Activated CD8-positive, alpha-beta memory T cell treated with anti-CD3 and anti-CD28 coated beads, Interleukin-2, amount 10 ng/mL, durations not matched to agents 7 days and 5 days (primary cell): ENCODE measurements at regions of chr11 and their contacts with region 1.

Region 1: DNA sequence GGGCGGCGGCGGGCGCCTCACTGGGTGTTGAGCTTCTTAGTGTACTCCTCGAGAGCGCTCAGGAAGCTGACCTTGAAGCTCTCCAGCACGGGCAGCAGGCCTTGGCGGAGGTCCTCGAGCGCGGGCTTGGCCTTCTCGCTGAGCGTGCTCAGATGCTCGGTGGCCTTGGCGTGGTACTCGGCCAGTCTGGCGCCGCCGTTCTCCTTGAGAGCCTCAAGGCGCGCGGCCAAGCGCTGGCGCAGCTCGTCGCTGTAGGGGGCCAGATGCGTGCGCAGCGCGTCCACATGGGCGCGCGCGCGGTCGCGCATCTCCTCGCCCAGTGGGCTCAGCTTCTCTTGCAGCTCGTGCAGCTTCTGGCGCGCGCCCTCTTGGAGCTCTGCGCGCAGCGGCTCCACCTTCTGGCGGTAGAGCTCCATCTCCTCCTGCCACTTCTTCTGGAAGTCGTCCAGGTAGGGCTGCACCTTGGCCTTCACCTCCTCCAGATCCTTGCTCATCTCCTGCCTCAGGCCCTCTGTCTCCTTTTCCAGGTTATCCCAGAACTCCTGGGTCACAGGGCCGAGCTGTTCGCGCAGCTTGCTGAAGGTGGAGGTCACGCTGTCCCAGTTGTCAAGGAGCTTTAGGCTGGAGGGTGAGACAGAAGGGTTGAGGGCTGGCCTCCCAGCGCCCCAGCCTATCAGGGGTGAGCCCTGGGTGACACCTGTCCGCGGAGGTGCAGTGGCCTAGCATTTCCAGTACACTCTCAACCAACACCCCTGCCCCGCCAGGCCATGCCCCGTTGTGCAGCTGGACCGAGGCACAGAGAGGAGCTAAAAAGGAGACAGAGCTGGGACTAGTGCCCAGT is 1.4 kb downstream of the APOA1 start:
- DNase-seq: peak; percentile 92
- ATAC-seq: peak; percentile 96
- H3K4me3 Mint-ChIP-seq: peak overlapping the region; percentile 71
- H3K27ac Mint-ChIP-seq: peak overlapping the region; percentile 61
- H3K4me1 Mint-ChIP-seq: peaks cover 12% of the 10 kb centered on the region
- H3K27me3 Mint-ChIP-seq: no peaks in the 10 kb centered on the region

Region 2: DNA sequence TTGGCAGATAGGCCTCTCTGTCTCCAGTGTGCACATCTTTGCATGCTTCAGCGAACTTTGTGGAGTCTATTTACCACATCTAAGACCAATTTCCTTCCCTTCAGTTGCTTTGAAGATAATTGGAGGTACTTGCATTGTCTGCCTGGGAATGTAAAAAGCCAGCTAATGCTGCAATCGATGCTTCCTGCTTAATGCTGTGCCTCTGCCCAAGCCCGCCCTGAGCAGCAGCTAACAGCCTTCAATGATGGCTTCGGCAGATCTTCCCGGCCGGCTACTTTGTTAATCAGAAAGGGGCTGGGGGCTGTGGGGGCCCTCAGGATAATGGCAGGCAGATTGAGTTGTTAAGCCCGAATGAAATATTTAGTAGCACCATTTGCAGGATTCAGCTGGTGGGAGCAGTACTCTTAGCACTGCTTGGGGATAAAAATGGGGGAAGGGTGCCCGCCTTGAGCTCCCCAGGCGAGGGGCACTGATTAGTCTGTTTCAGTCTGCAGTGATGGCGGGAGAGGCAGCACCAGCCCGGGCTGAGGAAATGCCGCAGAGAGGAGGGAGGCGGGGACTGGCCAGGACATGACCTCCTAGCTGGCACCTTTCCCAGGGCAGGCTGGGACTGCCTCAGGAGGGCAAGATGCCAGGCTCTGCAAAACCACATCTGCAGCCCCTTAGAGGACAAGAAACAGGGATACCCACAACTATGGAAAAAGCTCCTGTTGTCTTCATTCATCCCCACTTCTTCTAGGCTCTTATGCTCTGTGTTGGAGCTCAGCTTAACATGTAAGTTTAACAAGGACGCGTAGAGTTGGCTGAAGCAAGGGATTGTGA is 523.2 kb before region 1 on chr11:
- CTCF ChIA-PET with region 1: no interaction called
- DNase-seq: no peak
- ATAC-seq: no peak
- H3K4me3 Mint-ChIP-seq: no peak overlapping the region
- H3K27ac Mint-ChIP-seq: no peak overlapping the region
- H3K4me1 Mint-ChIP-seq: no peaks in the 10 kb centered on the region
- H3K27me3 Mint-ChIP-seq: peaks cover 13% of the 10 kb centered on the region

Region 3: DNA sequence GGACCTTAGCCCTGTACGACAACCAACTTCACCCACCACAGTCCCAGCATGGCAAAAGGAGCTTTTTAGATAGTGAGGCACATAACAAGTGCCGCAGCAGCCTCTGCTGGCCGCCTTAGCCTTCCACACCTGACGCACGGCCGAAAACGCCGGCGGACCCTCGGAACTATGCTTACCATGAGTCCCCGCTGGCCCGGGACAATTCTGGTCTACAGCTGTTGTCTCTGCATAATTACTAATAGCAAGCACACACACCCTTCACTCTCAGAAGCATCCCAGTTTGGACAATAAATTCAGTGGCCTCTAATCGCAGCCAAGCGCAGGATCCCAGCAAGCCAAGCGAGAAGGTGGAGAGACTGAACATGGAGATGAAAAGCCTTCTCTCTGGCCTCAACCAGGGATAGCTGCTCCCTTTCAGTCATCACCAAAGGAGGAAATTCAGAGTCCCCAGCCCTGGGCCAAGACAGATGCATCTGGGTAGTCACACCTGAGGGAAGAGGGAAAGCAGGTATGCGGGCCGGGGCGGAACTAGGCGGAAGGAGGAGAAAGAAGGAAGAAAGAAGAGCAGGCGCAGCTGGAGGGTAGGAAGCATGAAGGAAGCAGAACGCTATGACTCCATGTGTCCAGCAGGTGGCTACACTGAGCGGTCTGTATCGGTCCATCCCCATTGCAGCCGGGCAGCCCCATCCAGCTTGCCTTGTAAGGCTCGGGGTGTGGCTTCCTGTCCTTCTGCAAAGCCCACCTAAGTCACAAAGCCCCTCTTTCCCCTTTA is 103.6 kb before region 1 on chr11:
- CTCF ChIA-PET with region 1: interaction called, 29 read pairs
- DNase-seq: peak; percentile 75
- ATAC-seq: peak; percentile 89
- H3K4me3 Mint-ChIP-seq: no peak overlapping the region
- H3K27ac Mint-ChIP-seq: no peak overlapping the region
- H3K4me1 Mint-ChIP-seq: peaks cover 12% of the 10 kb centered on the region
- H3K27me3 Mint-ChIP-seq: no peaks in the 10 kb centered on the region

Region 4: GRCh38 chr11:116742104-116742503 is 93.9 kb before region 1 on chr11:
- CTCF ChIA-PET with region 1: interaction called, 10 read pairs
- DNase-seq: no peak
- ATAC-seq: no peak
- H3K4me3 Mint-ChIP-seq: no peak overlapping the region
- H3K27ac Mint-ChIP-seq: no peak overlapping the region
- H3K4me1 Mint-ChIP-seq: peaks cover 6% of the 10 kb centered on the region
- H3K27me3 Mint-ChIP-seq: no peaks in the 10 kb centered on the region

Region 5: GRCh38 chr11:116853461-116854073 is 17.6 kb after region 1 on chr11:
- CTCF ChIA-PET with region 1: interaction called, 145 read pairs
- DNase-seq: peak; percentile 87
- ATAC-seq: peak; percentile 94
- H3K4me3 Mint-ChIP-seq: peak overlapping the region; percentile 67
- H3K27ac Mint-ChIP-seq: peak overlapping the region; percentile 94
- H3K4me1 Mint-ChIP-seq: peaks cover 62% of the 10 kb centered on the region
- H3K27me3 Mint-ChIP-seq: no peaks in the 10 kb centered on the region

Region 6: DNA sequence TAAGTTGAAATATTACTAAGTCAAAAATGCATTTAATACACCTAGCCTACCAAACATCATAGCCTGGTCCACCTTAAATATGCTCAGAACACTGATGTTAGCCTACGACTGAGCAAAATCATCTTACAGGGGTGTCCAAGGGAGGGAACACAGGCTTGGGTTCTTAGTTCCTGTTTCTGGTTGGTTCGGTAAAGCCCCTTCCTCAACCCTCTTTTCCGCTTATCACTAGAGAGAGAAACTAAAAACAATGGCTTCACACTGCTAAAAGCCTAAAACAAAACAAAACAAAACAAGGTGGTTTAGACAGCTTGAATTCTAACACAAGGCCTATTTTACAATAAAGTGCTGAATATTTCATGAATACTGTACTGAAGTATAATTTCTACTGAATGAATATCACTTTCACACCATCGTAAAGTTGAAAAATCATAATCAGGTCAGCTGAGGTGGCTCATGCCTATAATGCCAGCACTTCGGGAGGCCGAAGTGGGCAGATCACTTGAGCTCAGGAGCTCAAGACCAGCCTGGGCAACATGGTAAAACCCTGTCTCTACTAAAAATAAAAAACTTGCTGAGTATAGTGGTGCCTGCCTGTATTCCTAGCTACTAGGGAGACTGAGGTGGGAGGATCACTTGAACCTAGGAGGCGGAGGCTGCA is 144.3 kb after region 1 on chr11:
- CTCF ChIA-PET with region 1: no interaction called
- DNase-seq: no peak
- ATAC-seq: no peak
- H3K4me3 Mint-ChIP-seq: no peak overlapping the region
- H3K27ac Mint-ChIP-seq: no peak overlapping the region
- H3K4me1 Mint-ChIP-seq: peaks cover 24% of the 10 kb centered on the region
- H3K27me3 Mint-ChIP-seq: no peaks in the 10 kb centered on the region

Region 7: DNA sequence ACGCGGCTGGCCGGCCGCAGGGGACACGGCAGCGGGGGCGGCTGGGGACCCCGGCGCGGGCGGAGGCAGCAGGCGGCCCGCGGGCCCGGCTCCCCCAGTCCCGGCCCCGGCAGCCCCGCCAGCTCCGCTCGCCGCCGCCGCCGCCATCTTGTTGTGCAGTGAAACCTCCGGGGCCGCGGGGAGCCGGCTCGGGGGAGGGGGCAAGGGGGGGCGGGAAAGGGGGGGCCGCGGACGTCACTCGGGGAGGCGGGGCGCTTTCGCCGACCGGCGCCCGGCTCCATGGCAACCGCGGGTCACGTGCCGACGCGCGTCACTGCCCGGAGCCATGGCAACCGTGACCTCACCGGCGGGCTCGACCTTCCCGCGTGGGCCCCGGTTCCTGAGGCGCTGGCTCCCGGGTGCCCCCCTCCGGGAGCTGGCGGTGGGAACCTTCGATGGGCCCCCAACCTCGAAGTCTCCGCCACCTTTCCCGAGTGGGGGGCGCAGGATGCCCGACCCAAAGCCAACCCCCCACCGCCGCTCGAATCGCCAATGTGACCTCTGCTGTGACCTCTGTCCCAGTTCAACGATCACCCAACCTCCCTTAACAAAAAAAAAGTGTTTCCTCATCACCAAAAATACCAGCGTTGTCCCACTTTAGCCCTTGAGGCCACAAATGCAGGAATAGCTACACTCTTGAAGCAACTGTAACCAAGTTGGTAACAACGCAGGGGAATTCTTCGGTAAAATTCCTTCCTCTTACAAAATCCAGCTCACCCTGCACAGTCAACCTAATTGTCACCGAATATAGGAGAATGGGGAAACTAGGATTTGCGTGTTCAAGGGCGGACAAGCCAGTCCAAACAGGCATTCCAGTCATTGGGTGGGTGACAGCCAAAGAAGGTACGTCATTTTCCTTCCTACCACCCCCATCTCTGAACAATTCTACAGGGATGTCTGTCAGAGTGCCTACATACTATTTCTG is 262.5 kb after region 1 on chr11 and contains the start of gene SIK3:
- CTCF ChIA-PET with region 1: interaction called, 10 read pairs
- DNase-seq: peak; percentile 93
- ATAC-seq: peak; percentile 70
- H3K4me3 Mint-ChIP-seq: peak within 1 kb of the TSS; percentile 86
- H3K27ac Mint-ChIP-seq: peak within 1 kb of the TSS; percentile 90
- H3K4me1 Mint-ChIP-seq: peaks cover 43% of the 10 kb centered on the region
- H3K27me3 Mint-ChIP-seq: no peaks in the 10 kb centered on the region
- total RNA-seq, gene SIK3: 31.0 to 38.3 TPM

Region 8: GRCh38 chr11:117143871-117144476 is 308.0 kb after region 1 on chr11 and contains the start of gene PAFAH1B2:
- CTCF ChIA-PET with region 1: interaction called, 14 read pairs
- DNase-seq: peak; percentile 97
- ATAC-seq: peak; percentile 94
- H3K4me3 Mint-ChIP-seq: peak within 1 kb of the TSS; percentile 100
- H3K27ac Mint-ChIP-seq: peak within 1 kb of the TSS; percentile 88
- H3K4me1 Mint-ChIP-seq: peaks cover 39% of the 10 kb centered on the region
- H3K27me3 Mint-ChIP-seq: peaks cover 24% of the 10 kb centered on the region
- total RNA-seq, gene PAFAH1B2: 54.5 to 66.4 TPM